Mammary epithelial cell (primary cell): ENCODE measurements at regions of chr2 and their contacts with region 1.

Region 1: DNA sequence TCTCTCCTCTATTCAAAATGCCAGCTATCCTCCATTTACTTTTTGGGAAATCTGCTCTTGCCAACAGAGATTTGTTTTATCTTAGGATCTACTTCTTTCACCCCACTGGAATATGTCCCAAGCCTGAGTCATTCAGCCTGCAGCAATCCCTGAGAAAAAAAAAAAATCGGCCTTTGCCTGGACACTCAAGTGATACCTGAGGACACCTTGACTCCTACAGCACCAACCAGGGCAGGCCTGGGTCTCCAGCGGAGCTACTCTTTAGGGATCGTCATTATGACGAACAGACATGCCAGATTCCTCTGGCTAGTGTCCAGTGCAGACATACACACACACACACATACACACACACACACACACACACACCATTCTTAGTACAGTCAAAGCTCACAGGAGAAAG is 2.3 kb upstream of the UGT1A6 start:
- DNase-seq: peak; percentile 94
- H3K4me3 ChIP-seq: no peak overlapping the region
- H3K27ac ChIP-seq: peak overlapping the region; percentile 86
- H3K4me1 ChIP-seq: peaks cover 28% of the 10 kb centered on the region
- H3K27me3 ChIP-seq: no peaks in the 10 kb centered on the region
- CTCF ChIP-seq: no peak

Region 2: DNA sequence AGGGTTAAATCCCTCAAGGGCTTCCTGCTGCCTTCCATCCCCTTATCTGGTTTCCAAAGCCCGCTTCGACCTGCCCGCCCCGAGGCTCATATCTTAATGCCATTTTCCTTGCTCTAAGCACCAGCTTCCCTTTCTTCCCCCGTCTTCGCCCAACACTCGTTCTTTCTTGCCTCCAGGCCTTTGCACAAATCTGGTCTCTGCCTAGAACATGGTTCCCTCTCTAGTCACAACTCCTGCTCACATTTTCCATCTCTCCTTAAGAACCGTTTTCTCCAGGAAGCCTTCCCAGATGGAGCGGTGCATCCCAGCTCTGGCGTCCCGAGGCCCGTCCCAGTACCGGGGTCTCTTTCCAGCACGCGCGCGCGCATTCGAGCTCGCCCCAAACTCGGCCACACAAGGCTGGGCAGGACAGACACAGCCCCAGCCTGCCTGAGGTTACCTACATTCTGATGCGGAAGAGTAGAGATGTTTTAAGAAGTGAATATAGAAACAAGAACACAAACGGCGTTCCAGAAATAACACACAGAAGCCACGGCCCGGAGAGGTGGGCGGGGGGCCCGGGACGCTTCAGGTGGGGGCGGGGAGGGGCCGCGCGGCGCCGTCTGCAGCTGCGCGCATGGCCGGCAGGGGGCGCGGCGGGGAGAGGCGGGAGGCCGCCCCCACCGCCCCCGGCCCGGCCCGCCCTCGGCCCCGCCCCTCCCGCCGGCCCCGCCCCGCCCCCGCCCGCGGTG is 336.5 kb before region 1 on chr2 and contains the start of gene DGKD:
- CTCF ChIA-PET with region 1: no interaction called
- dilution Hi-C with region 1: no loop called
- in situ Hi-C with region 1: no loop called
- intact Hi-C with region 1: no loop called
- DNase-seq: peak; percentile 9
- H3K4me3 ChIP-seq: peak within 1 kb of the TSS; percentile 66 to 70 (median 69)
- H3K27ac ChIP-seq: peak within 1 kb of the TSS; percentile 36
- H3K4me1 ChIP-seq: peaks cover 29% of the 10 kb centered on the region
- H3K27me3 ChIP-seq: no peaks in the 10 kb centered on the region
- CTCF ChIP-seq: no peak
- total RNA-seq, gene DGKD: 9.2 to 17.1 TPM

Region 3: DNA sequence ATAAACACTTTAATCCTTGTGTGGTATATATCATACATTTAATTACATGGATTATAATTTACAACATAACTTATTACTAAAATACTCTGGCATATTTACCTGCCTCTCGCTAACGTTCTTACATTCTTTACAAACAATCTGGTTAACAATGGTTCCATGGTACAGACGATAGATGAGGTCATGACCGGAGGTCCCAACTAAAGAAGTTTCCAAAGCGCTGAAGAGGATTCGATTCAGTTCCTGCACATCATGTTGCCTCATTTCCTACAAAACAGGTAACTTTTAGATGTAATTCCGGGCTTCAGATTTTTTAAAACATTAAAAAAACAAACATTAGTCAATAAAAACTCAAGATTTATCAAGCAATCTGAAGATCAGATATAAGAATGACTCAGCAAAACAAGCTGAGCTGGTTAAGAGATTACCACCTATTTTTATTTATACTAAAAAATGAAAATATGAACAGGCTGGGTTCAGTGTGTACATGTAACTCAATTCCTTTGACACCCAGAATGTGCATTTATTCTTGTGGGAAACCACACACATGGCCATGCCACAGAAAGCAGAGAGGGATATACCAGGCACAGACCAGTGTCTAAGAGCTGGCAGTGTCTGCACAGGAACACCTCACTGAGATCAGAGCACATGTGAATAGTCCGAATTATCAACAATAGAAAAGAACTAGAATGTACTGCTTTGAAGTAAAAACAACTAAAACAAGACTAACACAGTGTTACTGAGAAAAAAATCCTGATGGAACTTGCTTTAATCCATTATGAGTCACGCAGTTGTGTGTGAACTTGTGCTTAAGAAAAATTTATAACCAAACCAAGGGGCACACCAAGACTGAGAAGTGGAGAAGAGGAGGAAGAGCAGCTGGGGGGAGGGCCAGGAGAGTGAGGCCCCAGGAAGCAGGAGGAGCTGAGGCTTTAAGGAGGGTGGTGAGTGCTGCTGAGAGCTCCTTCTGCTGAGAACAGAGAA is 133.4 kb before region 1 on chr2:
- CTCF ChIA-PET with region 1: no interaction called
- dilution Hi-C with region 1: no loop called
- in situ Hi-C with region 1: no loop called
- intact Hi-C with region 1: loop called (anchors 5 kb)
- DNase-seq: peak; percentile 92
- H3K4me3 ChIP-seq: peak overlapping the region in 2 of 3 experiments; percentile 3 to 25
- H3K27ac ChIP-seq: peak overlapping the region; percentile 62
- H3K4me1 ChIP-seq: peaks cover 15% of the 10 kb centered on the region
- H3K27me3 ChIP-seq: no peaks in the 10 kb centered on the region
- CTCF ChIP-seq: no peak

Region 4: GRCh38 chr2:233611284-233611683 is 79.2 kb before region 1 on chr2:
- CTCF ChIA-PET with region 1: no interaction called
- dilution Hi-C with region 1: no loop called
- in situ Hi-C with region 1: no loop called
- intact Hi-C with region 1: no loop called
- DNase-seq: no peak
- H3K4me3 ChIP-seq: no peak overlapping the region
- H3K27ac ChIP-seq: no peak overlapping the region
- H3K4me1 ChIP-seq: no peaks in the 10 kb centered on the region
- H3K27me3 ChIP-seq: no peaks in the 10 kb centered on the region
- CTCF ChIP-seq: no peak

Region 5: DNA sequence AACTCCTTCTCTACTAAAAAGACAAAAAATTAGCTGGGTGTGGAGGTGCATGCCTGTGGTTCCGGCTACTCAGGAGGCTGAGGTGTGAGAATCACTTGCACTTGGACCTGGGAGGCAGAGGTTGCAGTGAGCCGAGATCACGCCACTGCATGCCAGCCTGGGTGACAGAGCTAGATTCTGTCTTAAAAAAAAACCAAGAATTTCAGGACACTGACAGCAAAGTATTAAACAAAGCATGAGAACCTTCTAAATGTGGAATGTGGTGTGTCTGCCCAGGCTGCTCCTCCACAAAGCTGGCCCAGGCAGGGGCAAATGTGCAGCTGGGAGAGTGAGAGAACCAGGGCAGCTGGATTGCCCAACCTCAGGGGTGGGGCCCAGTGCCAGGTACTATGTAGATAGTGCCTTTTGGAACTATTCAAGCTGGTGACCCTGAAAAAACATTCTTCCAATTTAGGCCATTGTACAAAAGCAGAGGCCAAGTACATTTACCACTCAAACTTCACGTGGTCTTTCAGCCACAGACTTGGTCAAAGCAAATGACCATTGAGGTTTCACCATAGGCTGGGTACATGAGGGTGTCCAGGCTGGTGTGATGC is 15.6 kb after region 1 on chr2:
- CTCF ChIA-PET with region 1: no interaction called
- dilution Hi-C with region 1: no loop called
- in situ Hi-C with region 1: no loop called
- intact Hi-C with region 1: loop called (anchors 2 kb)
- DNase-seq: peak; percentile 47
- H3K4me3 ChIP-seq: no peak overlapping the region
- H3K27ac ChIP-seq: no peak overlapping the region
- H3K4me1 ChIP-seq: peaks cover 11% of the 10 kb centered on the region
- H3K27me3 ChIP-seq: no peaks in the 10 kb centered on the region
- CTCF ChIP-seq: no peak